Activated naive CD4-positive, alpha-beta T cell treated with anti-CD3 and anti-CD28 coated beads, Interleukin-2, amount 10 ng/mL, durations not matched to agents 7 days and 5 days (primary cell): ENCODE measurements at regions of chr12 and their contacts with region 1.

Region 1: DNA sequence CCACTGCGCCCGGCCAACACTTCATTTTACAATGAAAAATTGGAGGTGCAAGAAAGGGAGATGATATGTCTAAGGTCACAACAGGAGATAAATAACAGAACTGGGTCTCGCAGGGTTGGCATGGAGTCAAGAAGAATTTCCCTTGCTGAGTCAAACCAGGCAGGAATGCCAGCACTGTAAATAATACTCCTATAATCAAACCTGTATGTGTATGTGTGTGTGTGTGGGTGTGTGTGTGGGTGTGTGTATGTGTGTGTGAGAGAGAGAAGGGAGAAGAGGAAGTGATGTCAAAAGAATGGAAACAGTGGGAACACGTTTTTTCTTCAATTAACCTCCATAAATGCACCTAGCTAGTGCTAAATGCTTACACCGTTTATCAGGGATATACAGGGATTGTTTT is 70.4 kb downstream of the TMEM116 start:
- DNase-seq: no peak
- H3K4me3 Mint-ChIP-seq: no peak overlapping the region
- H3K27ac Mint-ChIP-seq: peak overlapping the region; percentile 26
- H3K4me1 Mint-ChIP-seq: peaks cover 25% of the 10 kb centered on the region
- H3K27me3 Mint-ChIP-seq: no peaks in the 10 kb centered on the region

Region 2: DNA sequence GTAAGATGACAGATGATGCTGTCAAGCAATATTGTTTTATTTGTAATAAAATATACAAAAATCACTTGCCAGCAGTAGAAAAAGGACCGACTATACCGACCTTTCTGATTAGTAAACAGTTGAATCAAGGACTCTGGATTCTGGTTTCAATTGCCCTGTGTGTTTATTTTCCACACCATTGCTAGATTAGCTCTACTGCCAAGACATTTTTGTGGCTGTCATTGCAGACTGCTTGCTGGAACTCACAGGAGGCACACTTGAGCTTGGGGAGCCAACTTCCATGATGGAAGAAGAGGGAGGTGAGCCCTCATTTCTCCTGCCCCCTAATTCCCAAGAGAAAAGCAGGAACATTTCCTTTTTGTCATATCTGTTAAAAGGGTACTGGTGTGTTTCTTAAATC is 49.3 kb before region 1 on chr12:
- CTCF ChIA-PET with region 1: no interaction called
- DNase-seq: no peak
- H3K4me3 Mint-ChIP-seq: no peak overlapping the region
- H3K27ac Mint-ChIP-seq: no peak overlapping the region
- H3K4me1 Mint-ChIP-seq: no peaks in the 10 kb centered on the region
- H3K27me3 Mint-ChIP-seq: no peaks in the 10 kb centered on the region

Region 3: GRCh38 chr12:112018571-112019237 is 76.1 kb after region 1 on chr12:
- CTCF ChIA-PET with region 1: interaction called, 65 read pairs
- DNase-seq: no peak
- H3K4me3 Mint-ChIP-seq: no peak overlapping the region
- H3K27ac Mint-ChIP-seq: no peak overlapping the region
- H3K4me1 Mint-ChIP-seq: peaks cover 39% of the 10 kb centered on the region
- H3K27me3 Mint-ChIP-seq: no peaks in the 10 kb centered on the region